Activated CD4-positive, alpha-beta memory T cell treated with anti-CD3 and anti-CD28 coated beads for 36 hours (primary cell): ENCODE measurements at regions of chr9 and their contacts with region 1.

Region 1: GRCh38 chr9:31347082-31347617 is 1037.3 kb upstream of the ACO1 start:
- DNase-seq: peak; percentile 18
- H3K4me3 Mint-ChIP-seq: peak overlapping the region; percentile 69
- H3K27ac Mint-ChIP-seq: peak overlapping the region; percentile 97
- H3K4me1 Mint-ChIP-seq: peaks cover 38% of the 10 kb centered on the region
- H3K27me3 Mint-ChIP-seq: no peaks in the 10 kb centered on the region

Region 2: GRCh38 chr9:31100311-31100710 is 246.8 kb before region 1 on chr9:
- CTCF ChIA-PET with region 1: no interaction called
- POLR2A ChIA-PET with region 1: no interaction called
- intact Hi-C with region 1: no loop called
- DNase-seq: no peak
- H3K4me3 Mint-ChIP-seq: no peak overlapping the region
- H3K27ac Mint-ChIP-seq: no peak overlapping the region
- H3K4me1 Mint-ChIP-seq: no peaks in the 10 kb centered on the region
- H3K27me3 Mint-ChIP-seq: peaks cover 3% of the 10 kb centered on the region

Region 3: GRCh38 chr9:31119882-31120454 is 227.2 kb before region 1 on chr9:
- CTCF ChIA-PET with region 1: no interaction called
- POLR2A ChIA-PET with region 1: no interaction called
- intact Hi-C with region 1: no loop called
- DNase-seq: peak; percentile 39
- H3K4me3 Mint-ChIP-seq: no peak overlapping the region
- H3K27ac Mint-ChIP-seq: no peak overlapping the region
- H3K4me1 Mint-ChIP-seq: peaks cover 5% of the 10 kb centered on the region
- H3K27me3 Mint-ChIP-seq: no peaks in the 10 kb centered on the region

Region 4: GRCh38 chr9:31236344-31236743 is 110.8 kb before region 1 on chr9:
- CTCF ChIA-PET with region 1: no interaction called
- POLR2A ChIA-PET with region 1: no interaction called
- intact Hi-C with region 1: no loop called
- DNase-seq: no peak
- H3K4me3 Mint-ChIP-seq: no peak overlapping the region
- H3K27ac Mint-ChIP-seq: no peak overlapping the region
- H3K4me1 Mint-ChIP-seq: peaks cover 16% of the 10 kb centered on the region
- H3K27me3 Mint-ChIP-seq: no peaks in the 10 kb centered on the region

Region 5: GRCh38 chr9:31259824-31260223 is 87.3 kb before region 1 on chr9:
- CTCF ChIA-PET with region 1: no interaction called
- POLR2A ChIA-PET with region 1: no interaction called
- intact Hi-C with region 1: loop called (anchors 5 kb)
- DNase-seq: no peak
- H3K4me3 Mint-ChIP-seq: no peak overlapping the region
- H3K27ac Mint-ChIP-seq: no peak overlapping the region
- H3K4me1 Mint-ChIP-seq: peaks cover 10% of the 10 kb centered on the region
- H3K27me3 Mint-ChIP-seq: no peaks in the 10 kb centered on the region

Region 6: GRCh38 chr9:31304576-31304975 is 42.6 kb before region 1 on chr9:
- CTCF ChIA-PET with region 1: no interaction called
- POLR2A ChIA-PET with region 1: no interaction called
- intact Hi-C with region 1: loop called (anchors 2 kb)
- DNase-seq: no peak
- H3K4me3 Mint-ChIP-seq: no peak overlapping the region
- H3K27ac Mint-ChIP-seq: no peak overlapping the region
- H3K4me1 Mint-ChIP-seq: peaks cover 23% of the 10 kb centered on the region
- H3K27me3 Mint-ChIP-seq: no peaks in the 10 kb centered on the region

Region 7: DNA sequence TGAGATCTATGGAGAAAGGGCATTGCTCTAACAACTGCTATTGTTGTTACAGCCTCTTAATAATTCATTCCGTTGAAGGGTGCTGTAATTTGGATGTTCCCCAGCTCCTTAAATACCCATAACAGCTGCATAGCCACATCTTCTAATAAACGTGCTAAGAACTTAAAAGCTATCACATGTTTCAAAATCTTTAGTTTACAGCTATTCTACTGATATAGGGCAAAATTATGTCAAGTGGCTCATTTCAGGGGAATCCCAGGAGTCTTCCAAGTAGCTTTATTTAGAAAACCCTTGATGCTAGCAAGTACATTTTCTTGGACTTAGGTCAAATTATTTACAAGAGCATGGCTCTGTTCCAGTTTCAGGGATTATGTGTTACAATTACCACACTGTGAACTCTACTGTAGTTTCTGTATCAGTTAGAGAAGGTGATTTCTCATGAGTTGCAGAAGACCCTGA is 46.9 kb after region 1 on chr9:
- CTCF ChIA-PET with region 1: no interaction called
- POLR2A ChIA-PET with region 1: no interaction called
- intact Hi-C with region 1: loop called (anchors 5 kb)
- DNase-seq: no peak
- H3K4me3 Mint-ChIP-seq: no peak overlapping the region
- H3K27ac Mint-ChIP-seq: no peak overlapping the region
- H3K4me1 Mint-ChIP-seq: peaks cover 18% of the 10 kb centered on the region
- H3K27me3 Mint-ChIP-seq: no peaks in the 10 kb centered on the region

Region 8: DNA sequence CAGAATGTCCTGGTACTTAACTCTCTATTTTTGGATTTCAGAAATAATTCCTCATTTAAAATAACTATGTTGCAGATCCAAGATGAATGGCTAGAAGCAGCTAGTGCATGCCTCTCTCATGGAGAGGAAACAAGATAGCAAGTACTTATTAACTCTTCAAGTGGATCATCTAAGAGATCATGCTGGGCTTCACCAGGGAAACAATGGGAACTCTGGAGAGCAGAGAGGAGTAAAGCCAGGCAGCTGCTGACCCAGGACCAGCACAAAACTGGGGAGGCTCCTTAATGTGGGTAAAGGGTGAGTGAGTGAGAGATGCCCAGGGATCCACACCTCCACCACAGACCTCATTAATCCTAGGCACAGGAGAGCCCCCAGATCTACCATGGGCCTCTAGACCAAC is 139.5 kb after region 1 on chr9:
- CTCF ChIA-PET with region 1: no interaction called
- POLR2A ChIA-PET with region 1: no interaction called
- intact Hi-C with region 1: no loop called
- DNase-seq: no peak
- H3K4me3 Mint-ChIP-seq: no peak overlapping the region
- H3K27ac Mint-ChIP-seq: no peak overlapping the region
- H3K4me1 Mint-ChIP-seq: no peaks in the 10 kb centered on the region
- H3K27me3 Mint-ChIP-seq: no peaks in the 10 kb centered on the region

Region 9: DNA sequence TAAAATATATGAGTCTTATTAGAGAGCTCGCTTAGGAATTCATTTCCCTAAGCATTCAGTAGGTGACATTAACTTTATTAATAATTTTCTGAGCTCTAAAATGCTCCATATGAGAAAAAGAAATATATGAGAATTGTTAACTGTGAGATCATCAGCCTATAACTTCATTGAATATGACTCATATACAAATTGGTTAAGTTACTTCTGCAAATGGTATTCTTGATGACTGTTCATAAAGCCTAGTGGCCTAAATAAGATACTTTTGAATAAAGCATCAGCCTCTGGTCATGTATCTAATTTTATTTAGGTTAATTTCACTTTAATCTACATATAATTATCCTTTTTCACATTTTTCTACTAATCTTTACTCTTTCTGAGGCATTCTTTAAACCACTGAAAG is 327.1 kb after region 1 on chr9:
- CTCF ChIA-PET with region 1: no interaction called
- POLR2A ChIA-PET with region 1: no interaction called
- intact Hi-C with region 1: loop called (anchors 10 kb)
- DNase-seq: no peak
- H3K4me3 Mint-ChIP-seq: no peak overlapping the region
- H3K27ac Mint-ChIP-seq: no peak overlapping the region
- H3K4me1 Mint-ChIP-seq: peaks cover 25% of the 10 kb centered on the region
- H3K27me3 Mint-ChIP-seq: no peaks in the 10 kb centered on the region